Naive thymus-derived CD4-positive, alpha-beta T cell (primary cell): ENCODE measurements at regions of chr1 and their contacts with region 1.

Region 1: GRCh38 chr1:31961536-31961935 is 23.4 kb upstream of the PTP4A2 start:
- DNase-seq: no peak
- ATAC-seq: no peak
- H3K4me3 ChIP-seq: no peak overlapping the region
- H3K4me3 Mint-ChIP-seq: peak overlapping the region; percentile 5 to 74 (median 56)
- H3K27ac ChIP-seq: no peak overlapping the region
- H3K27ac Mint-ChIP-seq: peak overlapping the region; percentile 44 to 94 (median 77)
- H3K4me1 ChIP-seq: peaks cover 8 to 34% of the 10 kb centered on the region in 2 donors
- H3K4me1 Mint-ChIP-seq: peaks cover 38 to 65% (median 61%) of the 10 kb centered on the region in 7 donors
- H3K27me3 ChIP-seq: no peaks in the 10 kb centered on the region
- H3K27me3 Mint-ChIP-seq: no peaks in the 10 kb centered on the region

Region 2: GRCh38 chr1:31762726-31763670 is 198.5 kb before region 1 on chr1:
- CTCF ChIA-PET with region 1: interaction called, 10 read pairs
- POLR2A ChIA-PET with region 1: interaction called, 3 read pairs
- intact Hi-C with region 1: loop called in 1 of 2 experiments (anchors 1 kb)
- DNase-seq: peak; percentile 51 to 81 (median 67)
- ATAC-seq: peak; percentile 64
- H3K4me3 ChIP-seq: peak overlapping the region; percentile 48
- H3K4me3 Mint-ChIP-seq: peak overlapping the region; percentile 71 to 89 (median 82)
- H3K27ac ChIP-seq: no peak overlapping the region
- H3K27ac Mint-ChIP-seq: no peak overlapping the region
- H3K4me1 ChIP-seq: peaks cover 23 to 32% of the 10 kb centered on the region in 2 donors
- H3K4me1 Mint-ChIP-seq: peaks cover 6 to 32% (median 26%) of the 10 kb centered on the region in 7 donors
- H3K27me3 ChIP-seq: no peaks in the 10 kb centered on the region
- H3K27me3 Mint-ChIP-seq: peaks cover 0 to 79% (median 4%) of the 10 kb centered on the region in 5 donors

Region 3: DNA sequence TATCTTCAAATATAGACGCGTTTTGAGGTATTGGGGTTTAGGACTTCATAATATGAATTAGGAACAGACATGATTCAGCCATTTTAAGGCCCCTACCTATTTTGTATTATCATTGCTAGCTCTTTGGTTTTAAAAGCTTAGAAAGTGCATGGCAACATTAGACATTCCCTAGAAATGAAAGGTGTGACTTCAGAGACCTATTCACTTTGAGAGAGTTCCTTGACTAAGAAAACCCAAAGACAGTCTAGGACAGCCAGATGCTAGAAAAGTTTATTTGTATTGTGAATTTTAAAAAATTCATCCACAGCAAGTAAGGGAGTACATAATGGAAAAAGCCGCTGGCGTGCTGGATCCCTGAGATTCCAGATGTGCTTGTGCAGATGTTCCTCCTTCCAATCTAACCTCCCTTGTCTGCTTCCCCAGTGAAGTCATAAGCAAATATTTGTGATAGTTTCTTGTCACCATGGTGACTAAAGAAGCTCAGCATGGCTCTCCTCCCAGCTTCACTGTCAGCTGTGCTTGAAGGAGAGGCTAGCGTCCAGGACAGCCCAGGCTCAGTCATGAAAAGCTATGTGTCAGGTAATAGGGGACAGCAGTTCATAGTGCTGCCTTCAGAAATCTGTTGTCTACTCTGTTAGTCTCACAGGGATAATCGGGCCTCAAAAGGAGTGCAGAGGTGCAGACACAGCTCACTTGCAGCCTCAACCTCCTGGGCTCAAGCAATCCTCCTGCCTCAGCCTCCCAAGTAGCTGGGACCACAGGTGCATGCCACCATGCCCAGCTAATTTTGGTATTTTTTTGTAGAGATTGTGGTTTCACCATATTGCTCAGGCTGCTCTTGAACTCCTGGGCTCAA is 181.1 kb after region 1 on chr1:
- CTCF ChIA-PET with region 1: no interaction called
- POLR2A ChIA-PET with region 1: no interaction called
- intact Hi-C with region 1: no loop called
- DNase-seq: no peak
- ATAC-seq: peak; percentile 16
- H3K4me3 ChIP-seq: no peak overlapping the region
- H3K4me3 Mint-ChIP-seq: no peak overlapping the region
- H3K27ac ChIP-seq: no peak overlapping the region
- H3K27ac Mint-ChIP-seq: peak overlapping the region in 8 of 9 donors; percentile 38 to 87 (median 56)
- H3K4me1 ChIP-seq: peaks cover 15% of the 10 kb centered on the region in 2 donors
- H3K4me1 Mint-ChIP-seq: peaks cover 37 to 76% (median 67%) of the 10 kb centered on the region in 7 donors
- H3K27me3 ChIP-seq: no peaks in the 10 kb centered on the region
- H3K27me3 Mint-ChIP-seq: no peaks in the 10 kb centered on the region

Region 4: DNA sequence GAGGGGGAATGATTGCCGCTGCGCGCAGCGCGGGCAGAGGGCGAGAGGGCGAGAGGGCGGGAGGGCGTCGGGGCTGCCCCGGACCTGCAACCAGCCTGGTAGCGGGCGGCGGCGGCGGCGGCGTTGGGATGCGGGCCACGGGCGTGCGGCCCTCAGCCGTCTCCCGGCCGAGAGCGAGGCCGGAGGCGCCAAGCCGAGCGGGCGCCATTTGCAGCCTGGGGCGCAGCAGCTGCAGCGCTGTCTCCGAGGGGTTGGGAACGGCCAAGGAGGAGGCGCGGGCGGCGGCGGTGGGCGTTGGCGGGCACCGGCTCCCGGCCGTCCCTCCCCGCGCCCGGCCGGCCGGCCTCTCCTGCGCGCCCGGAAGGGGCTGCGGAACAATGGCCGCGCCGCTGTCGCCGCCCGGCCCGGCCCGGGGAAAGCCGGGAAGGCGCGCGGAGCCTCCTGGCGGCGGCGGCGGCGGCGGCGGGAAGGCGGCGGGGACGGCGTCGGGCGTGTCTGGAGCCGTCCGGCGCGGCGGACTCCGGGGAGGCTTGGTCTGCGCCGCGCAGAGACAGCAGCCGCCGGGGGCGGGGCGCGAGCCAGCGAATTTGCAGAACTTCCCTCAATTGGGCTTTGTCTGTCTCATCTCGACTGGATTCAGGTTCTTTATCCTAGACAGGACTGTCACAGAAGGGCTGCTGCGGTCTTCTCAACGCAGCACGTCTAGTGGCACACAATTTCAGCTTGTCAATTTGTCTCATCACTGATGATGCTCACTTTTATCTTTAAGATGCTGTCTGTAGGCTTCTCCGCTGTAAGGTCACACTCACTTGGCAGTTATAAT is 539.1 kb after region 1 on chr1:
- CTCF ChIA-PET with region 1: no interaction called
- POLR2A ChIA-PET with region 1: no interaction called
- intact Hi-C with region 1: no loop called
- DNase-seq: peak in 3 of 9 donors; percentile 5 to 50 (median 15)
- ATAC-seq: peak; percentile 74
- H3K4me3 ChIP-seq: no peak overlapping the region
- H3K4me3 Mint-ChIP-seq: peak overlapping the region; percentile 71 to 85 (median 79)
- H3K27ac ChIP-seq: no peak overlapping the region
- H3K27ac Mint-ChIP-seq: no peak overlapping the region
- H3K4me1 ChIP-seq: no peaks in the 10 kb centered on the region
- H3K4me1 Mint-ChIP-seq: peaks cover 0 to 12% (median 3%) of the 10 kb centered on the region in 7 donors
- H3K27me3 ChIP-seq: peaks cover 0 to 3% of the 10 kb centered on the region in 2 donors
- H3K27me3 Mint-ChIP-seq: peaks cover 42 to 53% (median 45%) of the 10 kb centered on the region in 5 donors